Breast epithelium (tissue), 4 donors: ENCODE measurements at regions of chr11 and their contacts with region 1.

Region 1: DNA sequence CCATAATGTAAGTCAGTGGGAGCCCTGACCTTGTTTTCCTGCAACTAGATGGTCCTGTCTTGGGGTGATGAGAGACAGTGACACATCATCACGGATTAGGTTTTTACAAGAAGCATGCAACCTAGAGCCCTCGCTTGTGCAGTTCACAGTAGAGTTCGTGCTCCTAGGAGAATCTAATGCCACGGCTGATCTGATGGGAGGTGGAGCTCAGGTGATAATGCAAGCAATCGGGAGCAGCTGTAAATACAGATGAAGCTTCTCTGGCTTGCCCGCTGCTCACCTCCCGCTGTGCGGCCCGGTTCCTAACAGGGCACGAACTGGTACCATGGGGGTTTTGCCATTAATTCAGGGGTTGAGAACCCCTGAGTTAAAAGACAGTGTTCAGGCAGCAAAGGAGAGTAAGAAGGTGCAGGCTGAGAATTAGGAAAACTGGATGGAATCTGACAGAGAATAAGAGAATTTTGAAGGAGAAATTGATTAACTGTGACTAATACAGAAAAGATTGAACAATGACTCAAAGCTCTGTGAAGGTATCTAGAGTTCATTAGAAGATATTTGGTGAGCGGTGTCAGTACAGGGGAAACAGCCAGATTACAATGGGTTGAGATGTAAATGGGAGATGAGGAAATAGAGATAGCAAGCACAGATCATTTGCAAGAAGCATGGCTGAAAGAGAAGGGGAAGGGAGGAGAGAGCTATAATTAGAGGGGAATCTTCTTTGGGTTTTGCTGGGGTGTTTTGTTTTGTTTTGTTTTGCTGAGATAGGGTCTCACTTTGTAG is 21.0 kb downstream of the WEE1 start:
- DNase-seq: no peak
- H3K4me3 ChIP-seq: no peak overlapping the region
- H3K27ac ChIP-seq: no peak overlapping the region
- H3K4me1 ChIP-seq: no peaks in the 10 kb centered on the region
- H3K27me3 ChIP-seq: no peaks in the 10 kb centered on the region
- CTCF ChIP-seq: no peak
- POLR2A ChIP-seq: no peak

Region 2: GRCh38 chr11:9460322-9461067 is 134.0 kb before region 1 on chr11 and contains the start of gene ZNF143:
- intact Hi-C with region 1: loop called (anchors 5 kb)
- DNase-seq: peak; percentile 100
- H3K4me3 ChIP-seq: peak within 1 kb of the TSS; percentile 91 to 98 (median 95)
- H3K27ac ChIP-seq: peak within 1 kb of the TSS; percentile 99 to 100
- H3K4me1 ChIP-seq: no peaks in the 10 kb centered on the region
- H3K27me3 ChIP-seq: no peaks in the 10 kb centered on the region
- CTCF ChIP-seq: peak in 1 of 3 donors; percentile 74
- POLR2A ChIP-seq: peak; percentile 97
- total RNA-seq, gene ZNF143: 21.1 to 41.3 (median 39.2) TPM